Activated CD4-positive, alpha-beta memory T cell treated with anti-CD3 and anti-CD28 coated beads for 36 hours (primary cell): ENCODE measurements at regions of chr12 and their contacts with region 1.

Region 1: DNA sequence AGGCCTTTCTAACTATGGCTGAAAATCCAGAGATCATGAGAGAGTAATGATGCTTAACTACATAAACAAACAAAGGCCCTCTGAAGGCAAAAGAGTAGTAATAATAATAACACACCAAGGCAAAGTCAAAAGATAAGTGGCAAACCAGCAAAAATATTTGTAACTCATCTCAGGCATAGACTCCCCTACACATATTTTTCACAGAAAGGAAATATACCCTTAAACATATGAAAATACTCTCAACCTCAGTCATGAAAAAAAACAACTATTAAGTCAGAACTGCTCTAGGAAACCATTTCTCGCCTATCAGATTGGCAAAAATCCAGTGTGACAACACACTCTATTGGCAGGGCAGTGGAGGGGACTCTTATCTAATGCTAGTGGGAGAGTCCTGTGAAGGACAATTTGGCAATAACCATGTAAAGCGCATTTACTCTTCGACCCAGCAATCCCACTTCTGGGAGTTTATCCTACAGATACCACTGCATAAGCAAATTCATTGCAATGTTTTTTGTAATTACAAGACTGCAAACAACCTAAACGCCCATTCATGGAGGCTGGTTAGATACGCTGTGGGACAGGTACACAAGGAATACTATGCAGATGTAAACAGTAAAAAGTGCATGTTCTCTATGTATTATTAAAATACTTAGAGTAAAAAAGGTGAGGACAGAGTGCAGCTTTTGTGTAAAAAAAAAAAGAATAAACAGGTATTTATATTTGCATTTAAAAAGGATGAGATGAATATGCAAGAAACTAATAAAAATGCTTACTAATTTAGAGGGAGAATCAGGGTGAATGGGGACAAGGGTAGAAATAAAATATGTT is 26.0 kb upstream of the IL22 start:
- DNase-seq: no peak
- H3K4me3 Mint-ChIP-seq: no peak overlapping the region
- H3K27ac Mint-ChIP-seq: no peak overlapping the region
- H3K4me1 Mint-ChIP-seq: peaks cover 46% of the 10 kb centered on the region
- H3K27me3 Mint-ChIP-seq: peaks cover 30% of the 10 kb centered on the region

Region 2: DNA sequence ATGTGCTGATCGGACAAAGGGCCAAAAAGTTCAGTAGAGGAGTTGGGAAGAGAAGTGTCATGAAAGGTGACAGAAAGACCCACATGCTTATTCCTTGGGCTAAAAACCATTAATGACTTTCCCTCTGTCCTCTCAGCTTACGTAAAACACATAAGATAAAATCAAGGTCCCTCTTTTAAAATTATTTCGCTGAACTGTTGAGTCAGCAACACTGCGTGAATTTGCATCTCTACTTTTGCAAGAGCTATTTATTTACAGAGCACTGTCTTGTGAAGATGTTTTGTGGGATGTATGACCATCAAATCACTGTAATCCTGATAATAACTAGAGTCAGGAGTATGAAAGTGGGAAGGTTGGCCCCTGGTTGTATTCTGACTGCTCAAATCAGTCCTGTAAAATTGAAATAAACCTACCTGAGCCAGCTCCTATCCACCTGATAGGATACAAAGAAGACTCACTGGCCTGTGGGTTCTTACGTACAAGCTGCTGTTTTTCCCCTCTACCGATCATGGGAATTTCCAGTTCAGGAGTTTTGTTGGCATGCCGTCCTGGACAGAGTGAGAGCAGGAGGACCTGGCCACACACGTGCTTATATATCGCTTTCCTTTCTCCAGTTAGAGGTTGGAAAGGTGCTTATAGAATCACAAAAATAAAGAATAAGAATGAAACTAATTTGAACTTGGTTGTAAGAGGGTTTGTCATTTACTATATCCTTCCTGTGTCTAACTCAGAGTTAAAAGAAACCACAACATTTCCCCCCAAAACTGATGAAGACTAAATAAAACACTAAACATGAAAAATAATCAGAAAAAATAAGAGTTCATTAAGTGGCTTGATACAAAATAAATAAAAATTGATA is 247.3 kb before region 1 on chr12:
- CTCF ChIA-PET with region 1: no interaction called
- POLR2A ChIA-PET with region 1: no interaction called
- intact Hi-C with region 1: no loop called
- DNase-seq: no peak
- H3K4me3 Mint-ChIP-seq: peak overlapping the region; percentile 55
- H3K27ac Mint-ChIP-seq: peak overlapping the region; percentile 74
- H3K4me1 Mint-ChIP-seq: peaks cover 56% of the 10 kb centered on the region
- H3K27me3 Mint-ChIP-seq: no peaks in the 10 kb centered on the region

Region 3: DNA sequence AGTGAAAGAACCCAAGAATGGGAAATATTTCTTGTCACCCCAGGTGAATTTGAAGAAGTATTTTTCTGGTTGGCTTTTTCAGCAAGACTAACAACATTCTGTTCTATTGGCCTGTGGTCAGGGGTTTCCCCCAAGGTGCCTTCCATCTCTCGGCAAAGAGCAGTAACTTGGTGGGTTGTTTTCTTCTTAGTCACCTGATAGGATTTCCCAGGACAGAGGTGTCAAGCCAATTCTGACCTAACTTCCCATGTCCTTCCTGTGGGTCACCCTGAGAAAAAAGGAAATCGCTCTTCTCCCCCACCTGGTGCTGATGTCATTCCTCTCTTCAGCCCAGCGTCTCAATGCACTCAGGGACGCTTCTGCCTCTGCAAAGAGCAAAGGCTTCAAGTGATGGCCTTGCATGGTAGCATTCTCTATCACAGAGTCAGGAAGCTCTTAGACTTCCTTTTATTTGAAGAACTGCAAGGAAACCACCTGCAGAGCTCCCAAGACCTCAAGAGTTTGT is 103.8 kb before region 1 on chr12:
- CTCF ChIA-PET with region 1: no interaction called
- POLR2A ChIA-PET with region 1: no interaction called
- intact Hi-C with region 1: loop called (anchors 1 kb)
- DNase-seq: peak; percentile 75
- H3K4me3 Mint-ChIP-seq: peak overlapping the region; percentile 60
- H3K27ac Mint-ChIP-seq: peak overlapping the region; percentile 69
- H3K4me1 Mint-ChIP-seq: peaks cover 60% of the 10 kb centered on the region
- H3K27me3 Mint-ChIP-seq: no peaks in the 10 kb centered on the region

Region 4: DNA sequence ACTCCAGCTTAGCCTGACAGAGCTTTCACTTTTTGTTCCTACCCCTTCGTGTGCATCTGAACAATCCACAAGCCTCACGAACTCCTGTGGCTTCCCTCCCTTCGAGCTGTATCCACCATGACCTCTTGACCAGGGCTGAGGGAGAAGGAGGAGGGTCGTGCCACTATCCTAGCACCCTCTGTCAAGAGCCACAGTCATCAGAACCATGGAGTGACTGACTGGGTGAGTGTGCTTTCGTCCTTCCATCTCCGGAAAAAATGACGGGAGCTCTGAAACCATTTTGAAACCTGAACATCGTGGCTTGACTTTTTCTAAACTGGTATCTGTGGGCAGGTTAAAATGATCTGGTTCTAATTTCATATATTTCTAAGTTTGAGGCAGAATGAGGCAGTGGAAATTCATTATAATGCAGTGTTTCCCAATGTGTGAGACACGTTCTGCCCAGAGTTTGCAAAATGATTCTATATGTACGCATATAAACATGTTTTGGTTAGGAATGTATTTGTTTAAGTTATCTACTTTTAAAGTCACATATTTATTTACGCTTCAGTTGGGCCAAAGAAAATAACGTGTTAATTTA is 80.8 kb before region 1 on chr12:
- CTCF ChIA-PET with region 1: no interaction called
- POLR2A ChIA-PET with region 1: no interaction called
- intact Hi-C with region 1: loop called (anchors 5 kb)
- DNase-seq: peak; percentile 39
- H3K4me3 Mint-ChIP-seq: peak overlapping the region; percentile 64
- H3K27ac Mint-ChIP-seq: peak overlapping the region; percentile 87
- H3K4me1 Mint-ChIP-seq: peaks cover 41% of the 10 kb centered on the region
- H3K27me3 Mint-ChIP-seq: peaks cover 2% of the 10 kb centered on the region

Region 5: GRCh38 chr12:68240597-68241374 is 38.7 kb before region 1 on chr12:
- CTCF ChIA-PET with region 1: no interaction called
- POLR2A ChIA-PET with region 1: interaction called, 6 read pairs
- intact Hi-C with region 1: loop called (anchors 1 kb)
- DNase-seq: peak; percentile 72
- H3K4me3 Mint-ChIP-seq: no peak overlapping the region
- H3K27ac Mint-ChIP-seq: peak overlapping the region; percentile 13
- H3K4me1 Mint-ChIP-seq: peaks cover 46% of the 10 kb centered on the region
- H3K27me3 Mint-ChIP-seq: peaks cover 12% of the 10 kb centered on the region

Region 6: GRCh38 chr12:68259318-68259940 is 20.0 kb before region 1 on chr12:
- CTCF ChIA-PET with region 1: interaction called, 6 read pairs
- POLR2A ChIA-PET with region 1: interaction called, 3 read pairs
- intact Hi-C with region 1: loop called (anchors 1 kb)
- DNase-seq: peak; percentile 71
- H3K4me3 Mint-ChIP-seq: no peak overlapping the region
- H3K27ac Mint-ChIP-seq: peak overlapping the region; percentile 24
- H3K4me1 Mint-ChIP-seq: peaks cover 27% of the 10 kb centered on the region
- H3K27me3 Mint-ChIP-seq: peaks cover 37% of the 10 kb centered on the region

Region 7: GRCh38 chr12:68871921-68872320 is 592.5 kb after region 1 on chr12:
- CTCF ChIA-PET with region 1: no interaction called
- POLR2A ChIA-PET with region 1: no interaction called
- intact Hi-C with region 1: no loop called
- DNase-seq: peak; percentile 44
- H3K4me3 Mint-ChIP-seq: no peak overlapping the region
- H3K27ac Mint-ChIP-seq: no peak overlapping the region
- H3K4me1 Mint-ChIP-seq: no peaks in the 10 kb centered on the region
- H3K27me3 Mint-ChIP-seq: no peaks in the 10 kb centered on the region